ENCODE measurements at regions of chr2 and their contacts with region 1.

Region 1: GRCh38 chr2:64330281-64331113 is 123.5 kb upstream of the LGALSL start:
- DNase-seq: peak; percentile 54
- H3K4me3 Mint-ChIP-seq: no peak overlapping the region
- H3K27ac Mint-ChIP-seq: peak overlapping the region; percentile 64
- H3K4me1 Mint-ChIP-seq: peaks cover 49% of the 10 kb centered on the region
- H3K27me3 Mint-ChIP-seq: peaks cover 7% of the 10 kb centered on the region

Region 2: GRCh38 chr2:62972601-62973000 is 1357.9 kb before region 1 on chr2:
- intact Hi-C with region 1: no loop called
- DNase-seq: no peak
- H3K4me3 Mint-ChIP-seq: no peak overlapping the region
- H3K27ac Mint-ChIP-seq: no peak overlapping the region
- H3K4me1 Mint-ChIP-seq: peaks cover 3% of the 10 kb centered on the region
- H3K27me3 Mint-ChIP-seq: no peaks in the 10 kb centered on the region

Region 3: DNA sequence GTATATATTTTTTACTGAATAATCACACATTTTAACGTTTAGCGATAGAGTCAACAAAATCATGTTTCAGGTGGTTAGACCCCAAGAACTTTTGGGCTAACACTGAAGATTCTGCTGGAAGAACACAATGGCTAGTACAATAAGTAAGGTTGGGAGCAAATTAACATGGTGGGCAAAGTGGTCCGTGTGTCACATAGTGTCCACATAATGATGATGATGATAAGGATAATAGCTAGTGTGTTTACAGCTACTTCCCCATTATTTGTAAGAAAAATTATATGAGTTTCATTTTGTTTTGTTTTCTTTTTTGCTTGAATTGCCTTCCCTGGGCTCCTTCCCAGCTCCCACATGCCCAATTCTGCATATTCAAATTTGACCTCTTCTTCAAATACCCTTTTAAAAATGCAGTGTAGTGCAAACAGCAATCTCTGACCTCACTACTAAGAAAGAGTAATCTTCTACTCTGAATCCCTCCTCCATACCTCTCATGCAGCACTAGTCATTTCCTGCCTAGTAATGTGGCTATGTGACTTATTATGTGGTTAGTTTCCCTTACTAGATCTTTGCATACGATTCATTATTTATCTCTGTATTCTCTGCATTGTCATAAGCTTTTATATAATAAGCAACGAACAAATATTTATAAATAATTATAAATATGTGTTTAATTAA is 294.3 kb before region 1 on chr2:
- intact Hi-C with region 1: loop called (anchors 1 kb)
- DNase-seq: peak; percentile 30
- H3K4me3 Mint-ChIP-seq: peak overlapping the region; percentile 19
- H3K27ac Mint-ChIP-seq: peak overlapping the region; percentile 87
- H3K4me1 Mint-ChIP-seq: peaks cover 48% of the 10 kb centered on the region
- H3K27me3 Mint-ChIP-seq: no peaks in the 10 kb centered on the region

Region 4: GRCh38 chr2:64133828-64134227 is 196.7 kb before region 1 on chr2:
- intact Hi-C with region 1: loop called (anchors 1 kb)
- DNase-seq: no peak
- H3K4me3 Mint-ChIP-seq: peak overlapping the region; percentile 26
- H3K27ac Mint-ChIP-seq: peak overlapping the region; percentile 68
- H3K4me1 Mint-ChIP-seq: peaks cover 69% of the 10 kb centered on the region
- H3K27me3 Mint-ChIP-seq: no peaks in the 10 kb centered on the region

Region 5: DNA sequence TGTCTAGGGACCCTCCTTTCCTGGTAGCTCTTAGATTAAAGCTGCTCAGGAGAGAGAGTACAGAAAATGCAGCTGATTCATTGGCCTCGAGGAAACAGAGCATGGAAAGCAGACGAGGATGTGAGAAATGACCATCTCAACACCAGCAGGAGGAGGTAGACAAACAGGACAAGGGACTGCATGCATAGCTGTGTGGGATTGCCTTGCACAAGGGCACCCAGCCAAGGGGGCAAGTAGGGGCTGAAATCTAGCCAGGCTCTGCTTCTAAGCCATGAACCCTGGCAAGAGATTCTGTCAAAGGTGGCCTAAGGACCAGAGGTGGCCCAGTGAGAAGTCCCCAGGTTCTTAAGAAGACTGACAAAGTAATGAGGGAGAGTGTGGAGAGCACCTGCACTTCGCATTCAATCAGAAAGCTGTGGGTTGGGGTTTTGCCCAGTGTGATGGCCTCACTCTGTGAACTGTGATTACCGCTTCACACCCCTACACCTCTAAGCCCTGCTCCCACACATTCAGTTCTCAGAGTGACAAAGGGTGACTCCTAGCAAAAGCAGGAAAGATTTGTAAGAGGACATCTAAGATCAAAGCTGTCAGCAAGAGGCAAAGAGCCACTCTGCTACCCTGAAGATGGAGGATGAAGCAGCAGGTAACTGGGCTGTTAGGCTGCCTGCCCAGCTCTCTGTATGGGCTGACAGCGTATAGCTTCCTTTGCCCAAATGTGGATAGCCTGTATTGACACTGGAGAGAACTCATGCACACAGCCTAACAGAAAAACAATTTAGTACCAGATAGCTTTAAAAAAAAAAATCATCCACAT is 35.0 kb before region 1 on chr2:
- intact Hi-C with region 1: loop called (anchors 2 kb)
- DNase-seq: no peak
- H3K4me3 Mint-ChIP-seq: no peak overlapping the region
- H3K27ac Mint-ChIP-seq: no peak overlapping the region
- H3K4me1 Mint-ChIP-seq: peaks cover 21% of the 10 kb centered on the region
- H3K27me3 Mint-ChIP-seq: peaks cover 27% of the 10 kb centered on the region

Region 6: DNA sequence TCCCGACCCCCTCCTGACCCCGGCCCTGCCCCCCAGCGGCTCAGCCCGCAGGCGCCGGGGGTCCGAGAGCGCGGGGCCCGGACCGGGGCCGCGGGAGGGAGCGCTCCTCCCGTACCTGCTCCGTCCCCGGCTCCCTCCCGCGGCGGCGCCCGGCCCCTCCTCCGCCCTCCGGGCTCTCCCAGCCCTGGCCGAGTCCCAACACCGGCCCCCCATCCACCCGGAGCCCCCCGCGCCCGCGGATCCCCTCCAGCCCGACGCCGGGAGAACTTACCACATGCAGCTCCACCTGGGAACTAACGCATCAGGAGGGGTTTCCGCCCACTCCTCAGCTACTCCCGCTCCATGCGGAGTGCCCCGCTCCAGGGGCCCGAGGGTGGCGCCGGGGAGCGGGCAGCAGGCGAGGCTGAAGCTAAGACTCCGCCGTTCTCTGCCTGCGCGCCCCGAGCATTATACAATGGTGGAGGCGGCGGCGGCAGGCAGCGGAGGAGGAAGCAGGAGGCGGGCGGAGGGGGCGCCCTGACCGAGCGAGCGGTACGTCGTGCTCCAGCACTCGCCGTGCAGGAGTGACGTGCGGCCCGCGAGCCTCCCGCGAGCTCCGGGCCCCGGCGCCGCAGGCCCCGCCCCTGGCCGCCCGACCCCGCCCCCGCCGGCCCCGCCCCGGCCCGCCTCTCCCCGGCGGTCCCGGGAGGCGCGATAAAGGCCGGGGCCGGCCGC is 323.0 kb after region 1 on chr2 and contains the start of gene SERTAD2:
- intact Hi-C with region 1: loop called (anchors 10 kb)
- DNase-seq: peak; percentile 82
- H3K4me3 Mint-ChIP-seq: peak within 1 kb of the TSS; percentile 91
- H3K27ac Mint-ChIP-seq: peak within 1 kb of the TSS; percentile 90
- H3K4me1 Mint-ChIP-seq: peaks cover 63% of the 10 kb centered on the region
- H3K27me3 Mint-ChIP-seq: no peaks in the 10 kb centered on the region
- total RNA-seq, gene SERTAD2: 29.2 and 31.0 TPM in 2 replicates

Region 7: DNA sequence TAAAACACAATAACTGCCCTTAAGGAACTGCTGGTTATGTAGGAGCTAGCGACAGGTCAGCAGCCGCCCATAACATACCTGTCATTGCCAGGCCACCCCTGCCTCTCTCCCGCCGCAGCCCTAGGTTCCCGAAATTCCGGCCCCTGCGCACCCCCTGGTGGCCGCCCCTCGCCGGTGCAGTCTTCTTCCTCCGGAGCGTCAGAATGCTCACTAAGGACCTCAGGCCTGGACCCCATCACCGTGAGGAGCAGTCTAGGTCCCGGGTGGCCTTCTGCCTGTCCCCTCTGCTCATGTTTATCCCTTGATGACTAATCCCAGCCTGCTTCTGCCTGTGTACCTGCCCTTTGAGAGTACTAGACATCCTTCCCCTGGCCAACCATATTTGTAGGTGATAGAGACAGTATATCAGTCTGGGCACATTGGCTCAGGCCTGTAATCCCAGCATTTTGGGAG is 543.0 kb after region 1 on chr2:
- intact Hi-C with region 1: loop called (anchors 2 kb)
- DNase-seq: peak; percentile 73
- H3K4me3 Mint-ChIP-seq: no peak overlapping the region
- H3K27ac Mint-ChIP-seq: peak overlapping the region; percentile 12
- H3K4me1 Mint-ChIP-seq: peaks cover 6% of the 10 kb centered on the region
- H3K27me3 Mint-ChIP-seq: peaks cover 12% of the 10 kb centered on the region

Measured in activated T-helper 2 cell treated with anti-CD3 and anti-CD28 coated beads, Interferon-gamma antibody, Interleukin-2, Interleukin-4, amounts not matched to agents 10 μg/mL and 5 μg/mL and 100 μg/mL, durations not matched to agents 14 hours and 24 hours and 36 hours (primary cell).